Activated naive CD4-positive, alpha-beta T cell treated with anti-CD3 and anti-CD28 coated beads, Interleukin-2, amount 10 ng/mL, durations not matched to agents 7 days and 5 days (primary cell): ENCODE measurements at regions of chr17 and their contacts with region 1.

Region 1: GRCh38 chr17:66152756-66153155 is 39.2 kb downstream of the CEP112 start:
- DNase-seq: no peak
- H3K4me3 Mint-ChIP-seq: no peak overlapping the region
- H3K27ac Mint-ChIP-seq: no peak overlapping the region
- H3K4me1 Mint-ChIP-seq: peaks cover 16% of the 10 kb centered on the region
- H3K27me3 Mint-ChIP-seq: peaks cover 4% of the 10 kb centered on the region

Region 2: DNA sequence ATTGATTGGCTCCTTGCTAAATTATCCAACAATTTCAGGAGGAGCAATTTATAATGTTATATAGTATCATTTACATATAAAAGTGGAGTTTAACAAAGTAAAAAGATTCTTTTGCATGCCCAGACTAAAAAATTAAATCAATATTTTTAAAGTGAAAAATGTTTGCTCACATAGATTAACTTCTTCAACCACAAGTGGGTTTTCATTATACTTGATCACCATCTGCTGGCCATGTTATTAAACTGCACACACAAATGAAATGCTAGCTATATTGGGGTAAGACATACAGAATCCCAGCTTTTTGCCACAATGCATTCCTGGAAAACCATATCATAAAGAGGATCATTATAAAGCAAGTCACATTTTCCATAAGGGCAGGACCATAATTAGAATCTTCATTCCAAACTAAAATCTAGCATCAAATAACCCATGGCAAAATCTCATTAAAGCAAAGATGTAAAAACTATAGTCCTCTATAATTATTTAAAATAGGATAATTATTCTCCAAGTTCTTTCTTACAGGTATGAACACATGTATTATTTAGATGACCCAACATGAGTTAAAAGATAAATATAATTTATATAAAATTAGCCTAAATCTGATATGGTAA is 12.9 kb after region 1 on chr17:
- CTCF ChIA-PET with region 1: interaction called, 12 read pairs
- DNase-seq: no peak
- H3K4me3 Mint-ChIP-seq: no peak overlapping the region
- H3K27ac Mint-ChIP-seq: no peak overlapping the region
- H3K4me1 Mint-ChIP-seq: peaks cover 2% of the 10 kb centered on the region
- H3K27me3 Mint-ChIP-seq: no peaks in the 10 kb centered on the region

Region 3: DNA sequence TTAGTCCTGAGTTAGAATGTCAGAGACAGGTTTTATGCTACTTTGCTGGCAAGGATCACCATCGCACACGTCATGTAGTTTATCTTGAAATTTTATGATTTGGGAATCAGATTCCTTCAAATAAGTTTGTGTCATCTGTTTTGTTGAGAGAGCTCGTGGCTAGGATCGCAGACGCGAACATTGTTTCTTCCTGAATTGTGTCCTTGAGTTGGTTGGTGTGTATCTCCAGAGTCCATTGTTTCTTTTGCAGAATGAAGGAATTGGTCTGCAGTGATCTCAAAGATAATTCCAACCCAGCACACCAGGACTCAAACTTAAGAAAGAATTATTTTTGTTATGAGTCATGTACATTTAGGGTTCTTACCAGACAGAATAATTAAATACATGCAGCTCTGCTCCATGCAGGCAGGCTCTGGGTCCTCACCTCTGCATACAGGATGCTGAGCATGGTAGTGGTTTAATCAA is 201.2 kb after region 1 on chr17:
- CTCF ChIA-PET with region 1: no interaction called
- DNase-seq: no peak
- H3K4me3 Mint-ChIP-seq: no peak overlapping the region
- H3K27ac Mint-ChIP-seq: no peak overlapping the region
- H3K4me1 Mint-ChIP-seq: peaks cover 62% of the 10 kb centered on the region
- H3K27me3 Mint-ChIP-seq: no peaks in the 10 kb centered on the region